ENCODE measurements at regions of chr13 and their contacts with region 1.

Region 1: GRCh38 chr13:32586080-32586900 is at the start of gene PDS5B:
- DNase-seq: peak; percentile 92
- ATAC-seq: peak; percentile 91
- H3K4me3 Mint-ChIP-seq: peak within 1 kb of the TSS; percentile 86
- H3K27ac Mint-ChIP-seq: peak within 1 kb of the TSS; percentile 83
- H3K4me1 Mint-ChIP-seq: peaks cover 38% of the 10 kb centered on the region
- H3K27me3 Mint-ChIP-seq: peaks cover 8% of the 10 kb centered on the region
- CTCF ChIP-seq: peak; percentile 89
- total RNA-seq, gene PDS5B: 41.3 to 44.5 TPM (median 44.3 TPM) in 3 replicates

Region 2: DNA sequence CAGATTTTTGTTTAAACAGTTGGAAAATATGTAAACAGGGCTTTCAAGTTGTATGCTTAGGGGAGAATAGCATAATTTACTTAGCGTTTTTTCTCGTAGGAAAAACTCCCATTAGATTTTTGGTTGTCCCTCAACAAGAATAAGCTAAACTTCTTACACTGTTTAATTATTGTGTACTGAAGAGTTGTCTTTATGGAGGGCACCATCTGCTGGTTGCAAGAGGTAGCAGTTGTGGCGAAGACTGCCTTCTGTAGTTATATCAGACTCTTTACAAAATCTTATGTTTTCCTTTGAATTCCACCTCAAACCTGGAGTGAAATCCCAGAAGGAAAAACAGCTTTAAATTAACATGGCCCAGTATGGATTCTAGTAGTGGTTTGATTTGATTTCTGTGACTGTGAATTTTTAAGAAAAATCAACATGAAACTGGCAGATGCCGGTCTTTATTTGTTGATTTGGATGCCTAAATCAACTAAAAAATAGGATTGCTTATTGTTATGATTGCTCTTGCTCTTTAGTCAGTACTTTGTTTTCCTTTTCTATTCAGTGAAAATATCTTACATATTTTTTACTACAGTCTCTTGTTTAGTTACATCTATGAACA is 53.3 kb after region 1 on chr13:
- CTCF ChIA-PET with region 1: interaction called, 35 read pairs
- POLR2A ChIA-PET with region 1: interaction called, 4 read pairs
- DNase-seq: peak; percentile 19
- ATAC-seq: peak; percentile 74
- H3K4me3 Mint-ChIP-seq: no peak overlapping the region
- H3K27ac Mint-ChIP-seq: no peak overlapping the region
- H3K4me1 Mint-ChIP-seq: peaks cover 27% of the 10 kb centered on the region
- H3K27me3 Mint-ChIP-seq: no peaks in the 10 kb centered on the region
- CTCF ChIP-seq: peak; percentile 50

Region 3: GRCh38 chr13:32669030-32669646 is 82.8 kb after region 1 on chr13:
- CTCF ChIA-PET with region 1: interaction called, 18 read pairs
- POLR2A ChIA-PET with region 1: no interaction called
- DNase-seq: no peak
- ATAC-seq: no peak; the same call in 1 of the 2 replicates
- H3K4me3 Mint-ChIP-seq: no peak overlapping the region
- H3K27ac Mint-ChIP-seq: no peak overlapping the region
- H3K4me1 Mint-ChIP-seq: no peaks in the 10 kb centered on the region
- H3K27me3 Mint-ChIP-seq: no peaks in the 10 kb centered on the region
- CTCF ChIP-seq: peak; percentile 31; the same call in 1 of the 2 replicates

Measured in WTC11 (cell line).